ENCODE measurements at regions of chr14 and their contacts with region 1.

Region 1: GRCh38 chr14:74945823-74946682 is 9.3 kb downstream of the PGF start:
- DNase-seq: peak; percentile 72 to 86 (median 80)
- ATAC-seq: peak; percentile 89
- H3K4me3 ChIP-seq: no peak overlapping the region
- H3K27ac ChIP-seq: peak overlapping the region; percentile 21; the same call in 2 of the 3 replicates
- H3K4me1 ChIP-seq: peaks cover 13 to 45% of the 10 kb centered on the region in 2 experiments; a peak in 4 of 5 replicates
- H3K27me3 ChIP-seq: no peaks in the 10 kb centered on the region
- CTCF ChIP-seq: peak; percentile 81 to 91 (median 83)
- EP300 ChIP-seq: no peak
- POLR2A ChIP-seq: no peak; the same call in 1 of the 2 replicates
- RAD21 ChIP-seq: peak; percentile 64 to 76

Region 2: GRCh38 chr14:75002392-75003249 is 56.6 kb after region 1 on chr14 and contains the start of gene EIF2B2:
- CTCF ChIA-PET with region 1: no interaction called
- POLR2A ChIA-PET with region 1: no interaction called
- in situ Hi-C with region 1: no loop called
- intact Hi-C with region 1: loop called (anchors 5 kb)
- DNase-seq: peak; percentile 92 to 96 (median 94)
- ATAC-seq: peak; percentile 98
- H3K4me3 ChIP-seq: peak within 1 kb of the TSS; percentile 85
- H3K27ac ChIP-seq: peak within 1 kb of the TSS; percentile 80
- H3K4me1 ChIP-seq: peaks cover 5 to 8% of the 10 kb centered on the region in 2 experiments; a peak in 2 of 5 replicates
- H3K27me3 ChIP-seq: no peaks in the 10 kb centered on the region
- CTCF ChIP-seq: peak in 2 of 3 experiments; percentile 14 to 21; a peak in 2 of 6 replicates
- EP300 ChIP-seq: no peak
- POLR2A ChIP-seq: peak; percentile 73
- RAD21 ChIP-seq: no peak
- polyA plus RNA-seq, gene EIF2B2: 10.6 to 16.1 TPM

Region 3: GRCh38 chr14:75088574-75089373 is 142.7 kb after region 1 on chr14:
- CTCF ChIA-PET with region 1: interaction called, 21 read pairs
- POLR2A ChIA-PET with region 1: no interaction called
- in situ Hi-C with region 1: no loop called
- intact Hi-C with region 1: loop called (anchors 1 kb)
- DNase-seq: peak; percentile 33 to 63 (median 37)
- ATAC-seq: peak; percentile 85
- H3K4me3 ChIP-seq: no peak overlapping the region
- H3K27ac ChIP-seq: no peak overlapping the region
- H3K4me1 ChIP-seq: no peaks in the 10 kb centered on the region
- H3K27me3 ChIP-seq: no peaks in the 10 kb centered on the region
- CTCF ChIP-seq: peak; percentile 61 to 84 (median 70)
- EP300 ChIP-seq: no peak
- POLR2A ChIP-seq: no peak
- RAD21 ChIP-seq: peak; percentile 74 to 90

Region 4: DNA sequence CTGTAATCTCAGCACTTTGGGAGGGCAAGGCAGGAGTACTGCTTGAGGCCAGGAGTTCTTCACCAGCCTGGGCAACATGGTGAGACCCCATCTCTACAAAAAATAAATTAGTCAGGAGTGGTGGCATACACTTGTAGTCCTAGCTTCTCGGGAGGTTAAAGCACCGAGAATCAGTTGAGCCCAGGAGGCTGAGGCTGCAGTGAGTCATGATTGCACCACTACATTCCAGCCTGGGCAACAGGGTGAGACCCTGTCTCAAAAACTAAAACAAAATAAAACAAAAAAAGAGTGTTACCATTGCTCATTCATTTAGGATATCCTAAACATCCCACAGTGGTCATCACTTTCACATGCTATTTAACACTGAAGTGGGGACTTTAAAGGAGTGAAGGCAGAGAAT is 173.0 kb after region 1 on chr14:
- CTCF ChIA-PET with region 1: no interaction called
- POLR2A ChIA-PET with region 1: no interaction called
- in situ Hi-C with region 1: no loop called
- intact Hi-C with region 1: no loop called
- DNase-seq: no peak
- ATAC-seq: no peak
- H3K4me3 ChIP-seq: no peak overlapping the region
- H3K27ac ChIP-seq: no peak overlapping the region
- H3K4me1 ChIP-seq: peaks cover 0 to 5% of the 10 kb centered on the region in 2 experiments; a peak in 2 of 5 replicates
- H3K27me3 ChIP-seq: no peaks in the 10 kb centered on the region
- CTCF ChIP-seq: no peak
- EP300 ChIP-seq: no peak
- POLR2A ChIP-seq: no peak
- RAD21 ChIP-seq: no peak